ENCODE measurements at regions of chr12 and their contacts with region 1.

Region 1: GRCh38 chr12:40921563-40922163 is 229.4 kb downstream of the CNTN1 start:
- DNase-seq: no peak
- ATAC-seq: no peak
- H3K4me3 ChIP-seq: no peak overlapping the region
- H3K4me3 Mint-ChIP-seq: no peak overlapping the region
- H3K27ac ChIP-seq: no peak overlapping the region
- H3K27ac Mint-ChIP-seq: no peak overlapping the region
- H3K4me1 ChIP-seq: no peaks in the 10 kb centered on the region
- H3K4me1 Mint-ChIP-seq: peaks cover 0 to 1% (median 0%) of the 10 kb centered on the region in 7 donors
- H3K27me3 ChIP-seq: no peaks in the 10 kb centered on the region
- H3K27me3 Mint-ChIP-seq: peaks cover 0 to 7% (median 0%) of the 10 kb centered on the region in 5 donors

Region 2: DNA sequence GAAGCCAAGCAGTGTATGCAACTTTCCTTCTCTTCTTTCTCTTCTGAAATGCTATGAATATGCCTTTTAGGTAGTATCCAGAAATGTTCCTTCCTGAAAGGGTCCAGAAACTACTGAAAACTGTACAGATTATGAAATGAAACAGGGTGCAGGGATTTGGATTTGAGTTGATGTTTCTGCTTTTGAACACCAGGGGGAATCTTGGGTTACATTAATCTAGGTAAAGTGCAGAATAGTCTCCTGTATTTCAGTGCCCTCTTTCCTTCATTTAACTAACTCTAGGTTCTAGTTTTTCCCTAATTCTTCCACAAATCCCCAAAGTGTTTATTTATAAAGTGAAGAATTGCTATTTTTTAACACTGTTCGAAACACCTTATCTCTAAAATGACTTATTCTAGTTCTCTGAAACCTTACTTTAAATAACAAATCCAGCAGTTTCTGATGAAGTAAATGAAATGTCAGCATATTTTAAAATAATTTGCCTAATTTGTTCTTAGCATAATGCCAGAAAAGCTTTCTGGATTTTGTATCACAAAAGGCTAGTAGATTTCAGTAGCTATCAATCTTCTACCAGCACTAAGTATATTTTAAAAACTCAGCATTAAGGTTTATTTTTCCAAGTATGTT is 585.0 kb before region 1 on chr12:
- CTCF ChIA-PET with region 1: no interaction called
- POLR2A ChIA-PET with region 1: no interaction called
- intact Hi-C with region 1: loop called in 1 of 2 experiments (anchors 5 kb)
- DNase-seq: no peak
- ATAC-seq: no peak
- H3K4me3 ChIP-seq: no peak overlapping the region
- H3K4me3 Mint-ChIP-seq: no peak overlapping the region
- H3K27ac ChIP-seq: no peak overlapping the region
- H3K27ac Mint-ChIP-seq: no peak overlapping the region
- H3K4me1 ChIP-seq: no peaks in the 10 kb centered on the region
- H3K4me1 Mint-ChIP-seq: no peaks in the 10 kb centered on the region
- H3K27me3 ChIP-seq: no peaks in the 10 kb centered on the region
- H3K27me3 Mint-ChIP-seq: no peaks in the 10 kb centered on the region

Region 3: DNA sequence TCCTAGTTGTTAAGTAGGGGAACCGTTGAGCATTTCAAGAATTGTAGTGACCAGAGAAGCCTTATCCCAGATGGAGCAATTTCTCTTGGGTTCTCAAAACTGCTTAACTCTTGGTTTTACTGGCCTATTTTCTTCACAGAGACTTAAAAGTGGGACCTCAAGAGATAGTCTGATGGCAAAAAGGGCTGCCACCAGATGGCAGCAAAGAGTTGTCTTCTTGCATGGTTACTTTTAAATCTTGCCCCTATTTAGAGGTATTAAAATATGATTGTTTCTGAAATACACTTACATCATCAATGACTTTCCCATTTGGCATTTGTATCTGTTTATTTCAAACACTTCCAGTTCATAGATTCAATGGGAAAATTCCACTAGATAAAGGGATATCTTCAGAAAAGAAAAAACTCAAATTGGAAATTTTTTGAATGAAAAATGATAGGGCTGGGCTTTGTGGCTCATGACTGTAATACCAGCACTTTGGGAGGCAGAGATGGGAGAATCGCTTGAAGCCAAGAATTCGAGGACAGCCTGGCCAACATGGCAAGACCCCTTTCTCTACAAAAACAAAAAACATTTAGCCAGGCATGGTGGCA is 299.3 kb before region 1 on chr12:
- CTCF ChIA-PET with region 1: no interaction called
- POLR2A ChIA-PET with region 1: no interaction called
- intact Hi-C with region 1: loop called in 1 of 2 experiments (anchors 1 kb)
- DNase-seq: peak in 1 of 9 donors; percentile 19
- ATAC-seq: no peak
- H3K4me3 ChIP-seq: no peak overlapping the region
- H3K4me3 Mint-ChIP-seq: no peak overlapping the region
- H3K27ac ChIP-seq: no peak overlapping the region
- H3K27ac Mint-ChIP-seq: no peak overlapping the region
- H3K4me1 ChIP-seq: no peaks in the 10 kb centered on the region
- H3K4me1 Mint-ChIP-seq: no peaks in the 10 kb centered on the region
- H3K27me3 ChIP-seq: no peaks in the 10 kb centered on the region
- H3K27me3 Mint-ChIP-seq: peaks cover 0 to 7% (median 0%) of the 10 kb centered on the region in 5 donors